HepG2 (cell line): ENCODE measurements at regions of chr14 and their contacts with region 1.

Region 1: DNA sequence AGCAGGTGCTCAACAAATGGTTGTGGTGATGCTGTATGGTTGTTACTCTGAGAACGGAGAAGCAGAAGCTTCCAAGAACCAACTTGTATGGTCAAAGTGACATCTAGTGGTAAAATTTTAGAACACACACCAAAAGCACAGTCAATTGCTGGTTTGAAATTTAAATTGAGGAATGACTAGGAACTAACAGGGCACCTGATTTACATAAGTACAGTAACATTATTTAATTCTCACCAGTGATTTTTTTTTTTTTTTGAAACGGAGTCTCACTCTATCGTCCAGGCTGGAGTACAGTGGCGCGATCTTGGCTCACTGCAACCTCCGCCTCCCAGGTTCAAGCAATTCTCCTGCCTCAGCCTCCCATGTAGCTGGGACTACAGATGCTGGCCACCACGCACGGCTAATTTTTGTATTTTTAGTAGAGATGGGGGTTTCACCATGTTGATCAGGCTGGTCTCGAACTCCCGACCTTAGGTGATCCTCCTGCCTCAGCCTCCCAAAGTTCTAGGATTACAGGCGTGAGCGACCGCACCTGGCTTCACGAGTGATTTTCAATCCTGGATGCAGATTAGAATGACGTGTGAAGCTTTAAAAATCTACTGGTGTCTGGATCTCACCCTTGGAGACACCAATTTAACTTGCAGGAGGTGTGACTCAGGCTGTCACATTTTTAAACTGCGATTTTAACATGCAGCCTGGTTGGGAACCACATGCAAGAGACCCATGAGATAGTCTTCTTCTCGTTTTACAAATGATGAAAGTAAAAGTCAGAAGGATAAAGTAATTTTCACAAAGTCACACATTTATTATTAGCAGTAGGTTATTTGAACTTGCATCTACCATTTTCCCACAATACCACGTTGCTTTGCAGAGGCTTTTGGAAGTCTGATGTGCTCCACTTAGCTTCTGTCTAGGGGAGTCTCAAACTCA is 14.1 kb upstream of the NUMB start:
- DNase-seq: peak; percentile 64
- ATAC-seq: peak; percentile 81
- H3K4me3 ChIP-seq: no peak overlapping the region
- H3K27ac ChIP-seq: no peak overlapping the region
- H3K4me1 ChIP-seq: peaks cover 19% of the 10 kb centered on the region
- H3K27me3 ChIP-seq: no peaks in the 10 kb centered on the region
- CTCF ChIP-seq: peak; percentile 80
- EP300 ChIP-seq: no peak
- POLR2A ChIP-seq: no peak
- RAD21 ChIP-seq: peak; percentile 86

Region 2: GRCh38 chr14:73295198-73295796 is 177.2 kb before region 1 on chr14:
- CTCF ChIA-PET with region 1: interaction called, 24 read pairs
- POLR2A ChIA-PET with region 1: interaction called, 8 read pairs
- in situ Hi-C with region 1: no loop called
- intact Hi-C with region 1: loop called (anchors 1 kb)
- DNase-seq: peak; percentile 27
- ATAC-seq: no peak
- H3K4me3 ChIP-seq: no peak overlapping the region
- H3K27ac ChIP-seq: no peak overlapping the region
- H3K4me1 ChIP-seq: peaks cover 41% of the 10 kb centered on the region
- H3K27me3 ChIP-seq: no peaks in the 10 kb centered on the region
- CTCF ChIP-seq: peak; percentile 62
- EP300 ChIP-seq: no peak
- POLR2A ChIP-seq: no peak
- RAD21 ChIP-seq: peak; percentile 41; the same call in 1 of the 2 replicates